Common myeloid progenitor, CD34-positive (primary cell): ENCODE measurements at regions of chr19 and their contacts with region 1.

Region 1: DNA sequence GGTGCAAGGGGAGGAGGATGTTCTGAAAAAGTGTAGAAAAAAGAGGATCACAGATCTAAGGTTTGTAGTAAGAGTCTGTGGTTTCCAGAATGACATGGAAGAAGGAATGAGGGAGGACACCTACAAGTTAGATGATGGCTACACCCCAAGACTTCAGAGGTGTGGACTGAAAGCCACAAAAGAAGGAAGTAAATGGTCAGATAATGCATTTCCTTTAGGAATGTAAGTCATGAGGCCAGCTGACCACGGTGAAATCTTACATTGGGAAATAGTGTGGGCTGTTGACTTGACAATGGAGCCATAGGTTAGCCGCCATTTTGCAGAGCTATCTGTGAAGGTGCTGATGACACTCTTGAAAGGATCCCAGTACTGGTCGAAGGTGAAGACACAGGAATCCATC is 25.3 kb upstream of the FBXO27 start:
- DNase-seq: no peak
- H3K4me3 ChIP-seq: no peak overlapping the region
- H3K27ac ChIP-seq: no peak overlapping the region
- H3K4me1 ChIP-seq: peaks cover 0 to 8% (median 0%) of the 10 kb centered on the region in 4 experiments
- H3K27me3 ChIP-seq: no peaks in the 10 kb centered on the region

Region 2: DNA sequence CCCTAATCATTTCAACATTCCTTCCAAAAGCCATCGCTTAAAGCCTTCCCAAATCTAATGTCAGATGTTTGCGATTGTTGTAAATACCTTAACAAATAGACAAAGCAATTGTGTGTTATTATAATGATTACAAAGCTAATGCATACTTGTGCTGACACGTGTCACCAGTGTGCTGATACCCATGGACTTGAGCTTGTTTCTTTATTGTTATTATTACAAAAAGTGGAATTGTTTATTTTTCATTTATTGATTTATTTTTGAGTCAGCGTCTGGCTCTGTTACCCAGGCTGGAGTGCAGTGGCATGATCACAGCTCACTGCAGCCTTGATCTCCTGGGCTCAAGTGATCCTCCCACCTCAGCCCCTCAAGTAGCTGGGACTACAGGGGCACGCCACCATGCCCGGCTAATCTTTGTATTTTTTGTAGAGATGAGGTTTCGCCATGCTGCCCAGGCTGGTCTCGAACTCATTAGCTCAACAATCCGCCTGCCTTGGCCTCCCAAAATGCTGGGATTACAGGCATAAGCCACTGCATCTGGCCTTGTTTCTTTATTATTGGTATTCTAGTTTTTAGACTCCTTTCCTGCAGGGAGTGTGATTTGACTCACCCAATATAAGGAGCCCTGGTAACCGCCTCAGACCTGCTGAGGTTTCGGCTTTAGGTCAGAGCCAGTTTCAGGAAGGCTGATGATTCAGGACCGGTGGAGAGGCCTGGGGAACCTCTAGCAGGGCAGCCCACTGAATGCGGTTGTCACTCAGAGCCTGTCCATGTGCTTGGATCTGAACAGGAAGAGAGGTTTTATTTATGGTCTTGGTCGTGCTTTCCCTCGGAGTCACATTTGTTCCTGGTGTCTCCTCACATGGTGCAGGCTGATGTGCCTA is 79.9 kb before region 1 on chr19:
- CTCF ChIA-PET with region 1: no interaction called
- POLR2A ChIA-PET with region 1: no interaction called
- DNase-seq: peak; percentile 35 to 83 (median 72)
- H3K4me3 ChIP-seq: no peak overlapping the region
- H3K27ac ChIP-seq: no peak overlapping the region
- H3K4me1 ChIP-seq: peaks cover 0 to 21% (median 14%) of the 10 kb centered on the region in 4 experiments
- H3K27me3 ChIP-seq: peaks cover 0 to 22% (median 7%) of the 10 kb centered on the region in 5 experiments

Region 3: DNA sequence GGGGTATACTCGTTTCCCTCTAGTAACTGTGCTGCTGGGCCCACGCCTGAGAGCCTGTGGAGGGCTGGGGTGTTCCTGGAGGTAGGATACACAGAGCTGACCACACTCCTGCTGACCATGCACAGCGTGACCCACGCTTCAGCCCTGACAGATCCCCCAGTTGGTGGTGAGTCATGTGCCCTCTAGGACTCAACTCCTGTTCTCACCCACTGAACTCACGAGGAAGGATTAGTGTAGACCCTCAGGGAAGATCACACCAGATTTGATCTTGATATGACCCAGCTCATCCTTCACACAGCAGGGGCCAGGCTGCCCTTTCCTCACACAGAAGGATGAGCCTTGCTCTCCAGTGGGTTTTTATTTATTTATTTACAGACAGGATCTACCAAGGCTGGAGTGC is 13.3 kb after region 1 on chr19:
- CTCF ChIA-PET with region 1: interaction called, 10 read pairs
- POLR2A ChIA-PET with region 1: no interaction called
- DNase-seq: no peak
- H3K4me3 ChIP-seq: no peak overlapping the region
- H3K27ac ChIP-seq: no peak overlapping the region
- H3K4me1 ChIP-seq: peaks cover 0 to 13% (median 8%) of the 10 kb centered on the region in 4 experiments
- H3K27me3 ChIP-seq: no peaks in the 10 kb centered on the region

Region 4: DNA sequence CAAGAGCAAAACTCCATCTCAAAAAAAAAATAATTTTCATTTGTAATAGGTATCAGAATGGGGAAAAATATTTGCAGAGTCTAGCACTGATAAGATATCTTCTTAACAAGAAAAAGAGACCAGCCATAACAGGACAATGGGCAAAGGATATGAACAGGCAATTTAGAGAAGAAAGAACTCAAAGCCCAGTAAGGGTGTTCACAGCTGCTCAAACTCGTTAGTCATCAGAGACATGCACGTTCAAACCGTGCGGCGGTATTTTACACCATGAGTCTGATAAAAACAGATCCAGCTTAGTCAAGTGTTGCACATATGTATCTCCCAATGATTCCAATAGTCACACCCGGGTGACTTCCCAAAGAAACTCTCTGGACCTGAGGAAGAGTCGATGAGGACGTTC is 125.5 kb after region 1 on chr19:
- CTCF ChIA-PET with region 1: no interaction called
- POLR2A ChIA-PET with region 1: no interaction called
- DNase-seq: no peak
- H3K4me3 ChIP-seq: no peak overlapping the region
- H3K27ac ChIP-seq: no peak overlapping the region
- H3K4me1 ChIP-seq: peaks cover 0 to 4% (median under 1%) of the 10 kb centered on the region in 4 experiments
- H3K27me3 ChIP-seq: no peaks in the 10 kb centered on the region